HEK293 (cell line): ENCODE measurements at regions of chr11 and their contacts with region 1.

Region 1: GRCh38 chr11:67658691-67659271 is 8.3 kb upstream of the ACY3 start:
- H3K4me3 ChIP-seq: no peak overlapping the region
- H3K27ac ChIP-seq: no peak overlapping the region
- H3K4me1 ChIP-seq: no peaks in the 10 kb centered on the region
- CTCF ChIP-seq: no peak

Region 2: GRCh38 chr11:66663741-66664296 is 995.0 kb before region 1 on chr11:
- CTCF ChIA-PET with region 1: no interaction called
- POLR2A ChIA-PET with region 1: no interaction called
- H3K4me3 ChIP-seq: no peak overlapping the region
- H3K27ac ChIP-seq: no peak overlapping the region
- H3K4me1 ChIP-seq: no peaks in the 10 kb centered on the region
- CTCF ChIP-seq: no peak

Region 3: GRCh38 chr11:67534070-67534679 is 124.6 kb before region 1 on chr11:
- CTCF ChIA-PET with region 1: no interaction called
- POLR2A ChIA-PET with region 1: no interaction called
- H3K4me3 ChIP-seq: no peak overlapping the region
- H3K27ac ChIP-seq: no peak overlapping the region
- H3K4me1 ChIP-seq: no peaks in the 10 kb centered on the region
- CTCF ChIP-seq: no peak

Region 4: DNA sequence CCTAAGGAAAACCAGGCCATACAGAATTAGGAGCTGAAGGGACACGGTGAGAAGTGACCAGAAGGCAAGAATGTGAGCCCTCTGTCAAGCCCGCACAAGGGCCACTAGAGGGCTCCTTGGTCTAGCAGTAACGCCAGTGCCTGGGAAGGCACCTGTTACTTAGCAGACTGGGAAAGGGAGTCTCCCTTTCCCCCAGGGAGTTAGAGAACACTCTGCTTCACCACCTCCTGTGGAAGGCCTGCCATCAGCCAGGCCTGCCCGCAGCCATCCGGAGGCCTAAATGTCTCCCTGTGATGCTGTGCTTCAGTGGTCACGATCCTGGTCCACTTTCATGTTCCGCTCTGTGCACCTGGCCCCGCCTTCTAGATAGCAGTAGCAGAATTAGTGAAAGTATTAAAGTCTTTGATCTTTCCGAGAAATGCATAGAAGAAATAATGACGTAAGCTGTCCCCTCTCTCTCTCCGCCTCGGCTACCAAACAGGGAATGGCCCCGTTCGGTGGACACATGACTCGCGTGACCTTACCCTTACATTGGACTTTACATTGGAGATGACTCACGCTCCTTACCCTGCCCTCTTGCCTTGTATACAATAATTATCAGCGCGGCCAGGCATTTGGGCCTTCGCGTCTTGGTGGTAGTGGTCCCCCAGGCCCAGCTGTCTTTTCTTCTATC is 85.9 kb before region 1 on chr11:
- CTCF ChIA-PET with region 1: interaction called, 11 read pairs
- POLR2A ChIA-PET with region 1: no interaction called
- H3K4me3 ChIP-seq: no peak overlapping the region
- H3K27ac ChIP-seq: no peak overlapping the region
- H3K4me1 ChIP-seq: no peaks in the 10 kb centered on the region
- CTCF ChIP-seq: peak; percentile 30; the same call in 1 of the 2 replicates

Region 5: GRCh38 chr11:67630228-67630942 is 28.4 kb before region 1 on chr11:
- CTCF ChIA-PET with region 1: interaction called, 22 read pairs
- POLR2A ChIA-PET with region 1: interaction called, 3 read pairs
- H3K4me3 ChIP-seq: peak overlapping the region; percentile 70
- H3K27ac ChIP-seq: no peak overlapping the region
- H3K4me1 ChIP-seq: no peaks in the 10 kb centered on the region
- CTCF ChIP-seq: peak; percentile 88

Region 6: DNA sequence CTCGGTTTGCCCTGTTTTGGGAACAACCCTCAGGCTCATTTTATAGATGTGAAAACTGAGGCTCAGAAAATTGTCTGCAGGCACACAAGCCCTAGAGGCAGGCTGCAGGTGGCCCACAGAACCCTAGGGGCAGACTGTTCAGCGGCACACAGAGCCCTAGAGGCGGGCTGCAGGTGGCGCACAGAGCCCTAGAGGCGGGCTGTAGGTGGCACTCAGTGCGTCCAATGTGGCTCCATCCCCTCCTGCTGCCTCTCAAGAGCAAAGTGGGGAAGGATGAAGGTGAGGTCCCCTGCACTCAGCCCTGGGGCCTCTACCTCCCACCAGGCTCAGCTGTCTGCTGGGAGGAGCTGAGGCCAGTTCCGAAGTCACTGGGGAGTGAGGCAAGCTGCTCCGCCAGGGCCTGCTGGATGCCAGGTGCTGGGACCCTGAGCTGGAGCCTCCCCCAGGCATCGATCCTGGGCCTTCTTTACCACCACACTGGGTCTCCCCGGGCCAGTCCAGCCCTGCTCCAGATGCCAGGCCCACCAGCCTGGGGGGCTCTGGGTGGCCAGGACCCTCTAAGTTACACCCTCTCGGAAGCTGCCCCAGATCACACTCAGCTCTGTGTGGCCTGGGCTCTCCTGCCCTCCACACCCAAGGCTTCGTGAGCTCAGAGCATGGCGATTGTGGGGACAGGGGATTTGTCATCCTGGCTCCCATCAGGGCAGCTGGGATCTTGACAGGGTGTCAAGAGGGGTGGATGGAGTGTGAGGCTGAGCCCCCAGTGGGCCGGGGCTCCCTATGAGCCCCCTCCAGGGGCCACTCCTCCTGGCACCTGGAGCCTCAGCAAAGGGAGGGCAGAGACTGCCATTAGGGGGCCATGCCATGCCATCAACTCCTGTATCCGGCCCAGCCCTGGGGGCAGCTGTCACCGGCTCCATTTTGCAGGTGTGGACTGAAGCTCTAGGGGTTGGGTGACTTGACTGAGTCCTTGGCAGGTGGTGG is 10.3 kb before region 1 on chr11:
- CTCF ChIA-PET with region 1: interaction called, 14 read pairs
- POLR2A ChIA-PET with region 1: interaction called, 4 read pairs
- H3K4me3 ChIP-seq: no peak overlapping the region
- H3K27ac ChIP-seq: no peak overlapping the region
- H3K4me1 ChIP-seq: no peaks in the 10 kb centered on the region
- CTCF ChIP-seq: no peak

Region 7: DNA sequence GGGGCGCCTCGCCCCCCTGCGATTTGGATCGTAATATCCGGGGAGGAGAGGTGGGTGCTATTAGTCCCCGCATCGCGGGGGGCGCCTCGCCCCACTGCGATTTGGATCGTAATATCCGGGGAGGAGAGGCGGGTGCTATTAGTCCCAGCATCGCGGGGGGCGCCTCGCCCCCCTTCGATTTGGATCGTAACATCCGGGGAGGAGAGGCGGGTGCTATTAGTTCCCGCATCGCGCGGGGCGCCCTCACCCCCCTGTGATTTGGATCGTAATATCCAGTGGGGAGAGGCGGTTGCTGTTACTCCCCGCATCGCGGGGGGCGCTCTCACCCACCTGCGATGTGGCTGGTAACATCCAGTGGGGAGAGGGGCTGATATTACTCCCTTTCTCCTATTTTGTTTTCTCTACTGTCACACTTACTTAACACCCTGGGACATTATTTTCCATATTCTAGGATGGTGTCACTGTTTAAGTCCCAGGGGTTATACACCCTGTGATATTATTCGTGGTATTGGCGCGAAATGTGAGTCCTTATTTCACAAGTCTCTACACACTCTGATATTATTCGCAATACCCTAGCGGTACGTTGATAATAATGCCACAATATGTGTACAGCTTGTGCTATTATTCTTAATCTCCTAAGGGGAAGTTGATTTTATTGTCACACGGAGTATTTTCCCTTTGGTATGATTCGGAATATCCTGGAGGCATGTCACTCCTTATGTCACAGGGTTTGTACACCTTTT is 73.4 kb after region 1 on chr11:
- CTCF ChIA-PET with region 1: no interaction called
- POLR2A ChIA-PET with region 1: no interaction called
- H3K4me3 ChIP-seq: peak overlapping the region; percentile 46
- H3K27ac ChIP-seq: no peak overlapping the region
- H3K4me1 ChIP-seq: no peaks in the 10 kb centered on the region
- CTCF ChIP-seq: peak; percentile 40